CD8-positive, alpha-beta T cell (primary cell): ENCODE measurements at regions of chr3 and their contacts with region 1.

Region 1: DNA sequence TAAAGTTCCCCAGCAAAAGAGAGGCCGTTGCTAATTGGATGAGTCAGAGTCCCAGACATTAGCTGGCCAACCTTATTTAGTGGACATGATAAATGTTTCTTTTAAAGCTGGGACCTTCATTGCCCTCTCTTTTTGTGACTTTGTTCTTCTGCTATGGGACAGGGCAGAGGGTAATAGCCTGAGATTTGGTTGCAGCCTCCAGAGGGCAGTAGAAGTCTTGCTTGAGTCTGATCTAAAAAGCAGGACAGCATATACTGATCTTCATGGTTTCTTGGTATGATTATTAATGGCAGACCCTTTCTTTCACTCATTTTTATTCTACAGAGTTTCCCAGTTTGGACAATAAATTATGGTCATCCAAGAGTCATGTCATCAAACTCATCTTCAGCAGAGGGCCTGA is 25.1 kb upstream of the ZKSCAN7 start:
- DNase-seq: peak in 2 of 9 experiments; percentile 12 to 26
- ATAC-seq: no peak
- H3K4me3 ChIP-seq: no peak overlapping the region
- H3K4me3 Mint-ChIP-seq: no peak overlapping the region
- H3K27ac ChIP-seq: no peak overlapping the region
- H3K27ac Mint-ChIP-seq: no peak overlapping the region
- H3K4me1 ChIP-seq: no peaks in the 10 kb centered on the region
- H3K4me1 Mint-ChIP-seq: no peaks in the 10 kb centered on the region
- H3K27me3 ChIP-seq: no peaks in the 10 kb centered on the region
- H3K27me3 Mint-ChIP-seq: peaks cover 16% of the 10 kb centered on the region
- CTCF ChIP-seq: no peak

Region 2: GRCh38 chr3:44323341-44323955 is 206.5 kb before region 1 on chr3:
- CTCF ChIA-PET with region 1: no interaction called
- POLR2A ChIA-PET with region 1: no interaction called
- intact Hi-C with region 1: loop called in 1 of 2 experiments (anchors 5 kb)
- DNase-seq: peak; percentile 6 to 68 (median 58)
- ATAC-seq: no peak
- H3K4me3 ChIP-seq: no peak overlapping the region
- H3K4me3 Mint-ChIP-seq: no peak overlapping the region
- H3K27ac ChIP-seq: no peak overlapping the region
- H3K27ac Mint-ChIP-seq: no peak overlapping the region
- H3K4me1 ChIP-seq: no peaks in the 10 kb centered on the region
- H3K4me1 Mint-ChIP-seq: no peaks in the 10 kb centered on the region
- H3K27me3 ChIP-seq: peaks cover 0 to 3% of the 10 kb centered on the region in 2 experiments
- H3K27me3 Mint-ChIP-seq: peaks cover 9% of the 10 kb centered on the region
- CTCF ChIP-seq: peak; percentile 86

Region 3: DNA sequence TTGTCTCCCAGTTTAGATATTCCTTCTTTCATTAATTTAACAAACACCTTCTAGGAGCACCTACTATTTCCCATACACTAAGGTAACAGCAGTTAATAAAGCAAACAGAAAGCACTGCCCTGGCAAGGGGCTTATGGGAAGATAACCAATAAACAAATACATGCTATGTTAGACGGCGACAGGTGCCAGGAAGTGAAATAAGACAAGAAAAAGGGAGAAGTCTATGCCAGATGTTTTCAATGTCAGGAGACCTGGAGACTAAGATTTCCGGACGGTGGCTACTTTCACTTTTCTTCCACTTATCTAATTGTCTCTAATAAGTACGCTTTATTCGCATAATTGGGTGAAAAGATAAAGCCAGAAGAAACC is 19.9 kb before region 1 on chr3:
- CTCF ChIA-PET with region 1: interaction called, 5 read pairs
- POLR2A ChIA-PET with region 1: no interaction called
- intact Hi-C with region 1: loop called in 1 of 2 experiments (anchors 2 kb)
- DNase-seq: peak in 4 of 9 experiments; percentile 6 to 54 (median 21)
- ATAC-seq: peak; percentile 27
- H3K4me3 ChIP-seq: peak overlapping the region; percentile 78
- H3K4me3 Mint-ChIP-seq: peak overlapping the region; percentile 96
- H3K27ac ChIP-seq: peak overlapping the region; percentile 61 to 82
- H3K27ac Mint-ChIP-seq: peak overlapping the region; percentile 96
- H3K4me1 ChIP-seq: peaks cover 22% of the 10 kb centered on the region
- H3K4me1 Mint-ChIP-seq: peaks cover 49% of the 10 kb centered on the region
- H3K27me3 ChIP-seq: no peaks in the 10 kb centered on the region
- H3K27me3 Mint-ChIP-seq: no peaks in the 10 kb centered on the region
- CTCF ChIP-seq: no peak

Region 4: GRCh38 chr3:44861412-44862220 is 331.7 kb after region 1 on chr3 and contains the start of gene TMEM42:
- CTCF ChIA-PET with region 1: no interaction called
- POLR2A ChIA-PET with region 1: no interaction called
- intact Hi-C with region 1: loop called in 1 of 2 experiments (anchors 5 kb)
- DNase-seq: peak; percentile 72 to 96 (median 87)
- ATAC-seq: peak; percentile 89
- H3K4me3 ChIP-seq: peak within 1 kb of the TSS; percentile 86 to 92
- H3K4me3 Mint-ChIP-seq: peak within 1 kb of the TSS; percentile 87
- H3K27ac ChIP-seq: peak within 1 kb of the TSS; percentile 90 to 91
- H3K27ac Mint-ChIP-seq: peak within 1 kb of the TSS; percentile 92
- H3K4me1 ChIP-seq: peaks cover 31% of the 10 kb centered on the region
- H3K4me1 Mint-ChIP-seq: peaks cover 45% of the 10 kb centered on the region
- H3K27me3 ChIP-seq: no peaks in the 10 kb centered on the region
- H3K27me3 Mint-ChIP-seq: no peaks in the 10 kb centered on the region
- CTCF ChIP-seq: no peak
- total RNA-seq, gene TMEM42: 6.6 to 8.3 TPM

Region 5: GRCh38 chr3:44907612-44908011 is 377.7 kb after region 1 on chr3:
- CTCF ChIA-PET with region 1: interaction called, 94 read pairs
- POLR2A ChIA-PET with region 1: no interaction called
- intact Hi-C with region 1: no loop called
- DNase-seq: no peak
- ATAC-seq: no peak
- H3K4me3 ChIP-seq: no peak overlapping the region
- H3K4me3 Mint-ChIP-seq: no peak overlapping the region
- H3K27ac ChIP-seq: no peak overlapping the region
- H3K27ac Mint-ChIP-seq: no peak overlapping the region
- H3K4me1 ChIP-seq: no peaks in the 10 kb centered on the region
- H3K4me1 Mint-ChIP-seq: no peaks in the 10 kb centered on the region
- H3K27me3 ChIP-seq: peaks cover 0 to 3% of the 10 kb centered on the region in 2 experiments
- H3K27me3 Mint-ChIP-seq: peaks cover 26% of the 10 kb centered on the region
- CTCF ChIP-seq: no peak

Region 6: GRCh38 chr3:44913868-44914468 is 384.0 kb after region 1 on chr3:
- CTCF ChIA-PET with region 1: interaction called, 94 read pairs
- POLR2A ChIA-PET with region 1: no interaction called
- intact Hi-C with region 1: loop called in 1 of 2 experiments (anchors 1 kb)
- DNase-seq: peak; percentile 22 to 77 (median 66)
- ATAC-seq: peak; percentile 72
- H3K4me3 ChIP-seq: no peak overlapping the region
- H3K4me3 Mint-ChIP-seq: no peak overlapping the region
- H3K27ac ChIP-seq: no peak overlapping the region
- H3K27ac Mint-ChIP-seq: no peak overlapping the region
- H3K4me1 ChIP-seq: no peaks in the 10 kb centered on the region
- H3K4me1 Mint-ChIP-seq: no peaks in the 10 kb centered on the region
- H3K27me3 ChIP-seq: no peaks in the 10 kb centered on the region
- H3K27me3 Mint-ChIP-seq: peaks cover 10% of the 10 kb centered on the region
- CTCF ChIP-seq: peak; percentile 73